Lower leg skin (tissue), 4 donors: ENCODE measurements at regions of chr13 and their contacts with region 1.

Region 1: DNA sequence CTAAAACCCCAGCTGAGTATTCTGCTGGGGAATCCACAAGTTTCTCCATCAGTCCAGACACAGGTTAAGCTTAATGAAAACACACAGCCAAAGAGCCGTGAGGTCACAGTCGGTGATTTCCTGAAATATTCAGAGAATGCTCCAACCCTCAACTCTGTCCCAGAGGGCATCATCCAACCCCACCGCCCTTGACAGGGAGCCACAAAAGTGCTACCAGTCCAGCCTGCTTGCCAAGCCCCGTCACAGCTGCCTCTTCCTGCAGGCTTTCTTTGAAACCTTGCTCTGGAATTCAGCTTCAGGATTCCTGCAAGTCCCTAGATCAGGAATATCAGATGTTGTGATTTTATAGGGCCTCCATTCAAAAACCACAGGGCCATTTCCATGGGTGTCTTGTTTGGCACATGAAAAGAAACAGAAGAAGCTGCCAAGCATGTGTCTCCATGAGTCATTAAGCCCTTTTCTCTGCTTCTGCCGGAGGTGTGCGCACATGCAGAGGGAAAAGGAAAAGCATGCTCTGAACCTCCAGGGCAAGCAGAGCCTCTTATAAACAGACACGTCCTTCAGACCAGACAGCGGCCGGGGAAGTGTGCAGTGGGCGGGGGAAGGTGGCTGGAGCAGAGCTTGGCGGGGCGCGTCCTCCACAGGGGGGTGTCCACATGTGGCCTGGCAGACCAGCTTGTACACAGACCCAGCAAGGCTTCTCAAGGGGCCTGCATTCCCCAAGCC is 164.7 kb downstream of the KATNAL1 start:
- DNase-seq: peak in 1 of 2 donors; percentile 61
- H3K4me3 ChIP-seq: no peak overlapping the region
- CTCF ChIP-seq: no peak
- POLR2A ChIP-seq: no peak

Region 2: DNA sequence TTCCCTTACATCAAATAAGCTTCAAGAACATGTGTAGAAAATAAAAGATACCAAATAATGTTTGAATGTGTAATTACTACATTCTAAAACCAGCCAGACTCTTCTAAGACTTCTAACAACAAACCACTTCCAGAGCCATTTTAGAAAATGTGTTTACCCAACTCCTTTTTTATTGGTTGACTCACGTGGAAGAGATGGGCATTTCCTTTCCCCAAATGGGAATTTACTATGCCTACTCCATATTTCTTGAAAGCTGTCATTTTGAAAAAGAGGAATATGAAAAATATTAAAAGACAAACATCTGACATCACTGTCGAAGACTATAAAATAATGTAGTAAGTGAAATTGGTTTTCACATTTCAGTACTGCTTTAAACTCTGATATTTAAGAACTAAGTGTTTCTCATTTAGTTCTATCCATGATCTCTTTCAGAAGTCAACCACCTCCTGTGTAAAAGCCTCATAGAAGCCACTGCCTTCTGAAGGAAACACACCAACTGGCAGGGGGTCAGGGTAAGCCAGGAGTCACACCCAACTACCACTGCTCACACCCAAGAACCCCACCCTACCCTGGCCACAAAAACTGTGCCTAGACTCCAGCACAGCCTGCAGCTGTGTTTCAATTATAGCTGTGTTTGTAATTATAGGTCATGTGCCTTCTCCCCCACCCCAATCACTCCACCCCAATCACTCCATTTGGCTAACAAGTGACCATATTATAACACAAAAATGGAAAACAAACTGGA is 379.0 kb before region 1 on chr13:
- intact Hi-C with region 1: no loop called
- DNase-seq: no peak
- H3K4me3 ChIP-seq: no peak overlapping the region
- CTCF ChIP-seq: no peak
- POLR2A ChIP-seq: no peak

Region 3: DNA sequence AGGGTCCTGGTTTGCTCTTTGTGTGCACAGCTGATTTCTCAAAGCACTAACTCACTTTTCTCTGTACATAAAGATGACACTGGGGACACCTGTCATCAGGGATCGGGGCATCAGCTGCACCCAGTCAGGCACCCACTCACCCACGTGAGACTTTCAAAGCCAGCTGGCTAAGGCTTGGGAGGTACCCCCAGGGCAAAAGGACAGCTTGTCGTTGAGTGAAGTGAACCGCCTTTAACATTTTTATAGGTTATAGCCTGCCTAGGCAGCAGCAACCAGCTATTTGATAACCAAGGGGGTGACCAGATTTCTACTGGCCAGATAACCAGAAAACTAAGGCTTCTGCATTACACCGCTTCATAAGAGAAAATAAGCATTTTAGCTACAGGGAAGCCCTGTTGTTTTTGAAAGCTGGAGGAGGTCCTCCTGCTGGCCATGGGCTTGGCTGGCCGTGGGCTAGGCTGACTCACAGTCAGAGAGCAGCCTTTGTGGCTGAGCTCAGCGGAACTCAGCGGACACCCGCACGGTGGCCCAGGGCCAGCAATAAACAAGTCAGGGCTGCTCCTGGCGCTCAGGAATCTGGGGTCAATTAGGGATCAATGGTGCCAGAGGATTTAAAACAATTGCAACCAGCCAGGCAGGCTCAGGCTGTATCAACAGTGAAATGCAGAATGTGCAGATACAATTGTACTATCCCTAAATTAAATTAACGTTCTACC is 649.8 kb after region 1 on chr13:
- intact Hi-C with region 1: loop called (anchors 10 kb)
- DNase-seq: peak; percentile 61 to 92
- H3K4me3 ChIP-seq: no peak overlapping the region
- CTCF ChIP-seq: no peak
- POLR2A ChIP-seq: no peak